B cell (primary cell): ENCODE measurements at regions of chr4 and their contacts with region 1.

Region 1: DNA sequence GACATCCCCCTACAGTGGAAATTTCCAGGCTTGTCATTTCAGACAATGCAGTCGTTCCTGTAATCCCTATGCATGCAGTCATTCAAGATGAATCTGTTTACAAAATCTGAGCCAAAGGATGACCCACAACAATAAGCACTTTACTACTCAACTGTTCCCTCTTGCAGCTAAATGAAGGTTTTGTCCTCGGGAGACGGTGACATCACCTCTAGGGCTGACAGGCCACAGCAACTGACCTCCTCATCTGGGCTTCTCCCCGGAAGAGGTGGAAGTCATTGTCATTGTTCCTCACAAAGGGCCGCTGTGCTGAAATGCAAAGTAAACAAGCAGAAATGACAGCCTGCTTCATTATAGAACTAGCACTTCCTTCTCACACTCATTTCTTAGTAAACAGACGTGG is 29.2 kb downstream of the CLRN2 start:
- DNase-seq: no peak
- ATAC-seq: no peak
- H3K4me3 ChIP-seq: no peak overlapping the region
- H3K4me3 Mint-ChIP-seq: no peak overlapping the region
- H3K27ac ChIP-seq: no peak overlapping the region
- H3K27ac Mint-ChIP-seq: no peak overlapping the region
- H3K4me1 ChIP-seq: no peaks in the 10 kb centered on the region
- H3K4me1 Mint-ChIP-seq: no peaks in the 10 kb centered on the region
- H3K27me3 ChIP-seq: peaks cover 0 to 2% (median 0%) of the 10 kb centered on the region in 4 experiments
- H3K27me3 Mint-ChIP-seq: peaks cover 22% of the 10 kb centered on the region
- CTCF ChIP-seq: no peak

Region 2: GRCh38 chr4:17286752-17287460 is 257.3 kb before region 1 on chr4:
- CTCF ChIA-PET with region 1: no interaction called
- POLR2A ChIA-PET with region 1: no interaction called
- intact Hi-C with region 1: no loop called
- DNase-seq: no peak
- ATAC-seq: no peak
- H3K4me3 ChIP-seq: no peak overlapping the region
- H3K4me3 Mint-ChIP-seq: no peak overlapping the region
- H3K27ac ChIP-seq: no peak overlapping the region
- H3K27ac Mint-ChIP-seq: no peak overlapping the region
- H3K4me1 ChIP-seq: no peaks in the 10 kb centered on the region
- H3K4me1 Mint-ChIP-seq: no peaks in the 10 kb centered on the region
- H3K27me3 ChIP-seq: no peaks in the 10 kb centered on the region
- H3K27me3 Mint-ChIP-seq: no peaks in the 10 kb centered on the region
- CTCF ChIP-seq: no peak

Region 3: DNA sequence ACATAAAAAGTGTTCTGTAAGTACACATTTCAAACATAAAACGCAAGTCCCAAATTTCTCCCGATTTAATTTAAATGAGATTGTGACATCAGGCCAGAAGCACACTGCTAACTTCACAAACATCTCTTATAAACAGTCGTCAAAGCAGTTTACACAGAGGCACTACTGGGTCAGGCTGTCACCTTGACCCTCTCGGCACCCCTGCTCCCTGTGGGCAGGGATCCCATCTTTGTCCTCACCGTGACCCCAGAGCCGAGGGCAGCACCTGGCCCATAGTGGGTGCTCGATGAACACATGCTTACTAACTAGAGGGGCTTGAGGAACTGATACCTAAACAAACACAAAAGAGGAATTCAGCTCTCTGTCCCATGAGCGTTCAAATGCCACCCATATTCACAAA is 54.5 kb before region 1 on chr4:
- CTCF ChIA-PET with region 1: no interaction called
- POLR2A ChIA-PET with region 1: no interaction called
- intact Hi-C with region 1: no loop called
- DNase-seq: no peak
- ATAC-seq: no peak
- H3K4me3 ChIP-seq: no peak overlapping the region
- H3K4me3 Mint-ChIP-seq: no peak overlapping the region
- H3K27ac ChIP-seq: no peak overlapping the region
- H3K27ac Mint-ChIP-seq: no peak overlapping the region
- H3K4me1 ChIP-seq: no peaks in the 10 kb centered on the region
- H3K4me1 Mint-ChIP-seq: no peaks in the 10 kb centered on the region
- H3K27me3 ChIP-seq: no peaks in the 10 kb centered on the region
- H3K27me3 Mint-ChIP-seq: no peaks in the 10 kb centered on the region
- CTCF ChIP-seq: no peak

Region 4: DNA sequence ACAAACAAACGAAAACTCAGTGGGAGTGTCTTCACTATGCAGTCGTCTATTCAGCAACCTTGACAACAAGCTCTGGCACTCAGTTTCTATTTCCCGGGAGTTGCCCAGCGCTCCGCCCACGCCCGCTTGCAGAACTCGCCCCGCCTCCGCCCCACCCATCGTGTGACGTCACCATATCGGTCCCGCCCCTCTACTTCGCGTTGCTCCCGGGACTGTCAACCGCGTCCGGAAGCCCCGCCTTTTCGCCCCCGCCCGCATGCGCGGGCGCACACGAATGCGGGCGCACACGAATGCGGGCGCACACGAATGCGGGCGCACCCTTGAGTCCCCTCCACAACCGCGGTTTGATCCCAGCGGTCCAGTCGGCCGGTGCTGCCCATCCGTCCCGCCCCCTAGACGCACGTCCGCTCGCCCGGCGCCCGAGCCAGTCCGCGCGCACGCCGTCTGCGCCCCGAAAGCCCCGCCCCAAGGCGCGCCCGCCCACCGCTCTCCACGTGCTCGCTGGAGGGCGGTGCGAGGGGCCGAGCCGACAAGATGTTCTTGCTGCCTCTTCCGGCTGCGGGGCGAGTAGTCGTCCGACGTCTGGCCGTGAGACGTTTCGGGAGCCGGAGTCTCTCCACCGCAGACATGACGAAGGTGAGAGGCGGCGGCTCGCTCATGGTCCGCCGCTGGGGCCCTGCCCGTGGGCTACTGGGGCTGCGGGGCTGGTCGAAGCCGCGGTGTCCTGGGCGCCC is 32.9 kb after region 1 on chr4 and contains the start of gene LAP3:
- CTCF ChIA-PET with region 1: interaction called, 4 read pairs
- POLR2A ChIA-PET with region 1: no interaction called
- intact Hi-C with region 1: loop called (anchors 1 kb)
- DNase-seq: peak; percentile 99
- ATAC-seq: peak; percentile 89
- H3K4me3 ChIP-seq: peak within 1 kb of the TSS; percentile 71 to 95 (median 83)
- H3K4me3 Mint-ChIP-seq: peak within 1 kb of the TSS; percentile 92
- H3K27ac ChIP-seq: peak within 1 kb of the TSS; percentile 85 to 87
- H3K27ac Mint-ChIP-seq: peak within 1 kb of the TSS; percentile 96
- H3K4me1 ChIP-seq: peaks cover 13 to 25% of the 10 kb centered on the region in 2 donors
- H3K4me1 Mint-ChIP-seq: peaks cover 30% of the 10 kb centered on the region
- H3K27me3 ChIP-seq: no peaks in the 10 kb centered on the region
- H3K27me3 Mint-ChIP-seq: no peaks in the 10 kb centered on the region
- CTCF ChIP-seq: no peak
- total RNA-seq, gene LAP3: 30.1 and 33.5 TPM in 2 replicates

Region 5: DNA sequence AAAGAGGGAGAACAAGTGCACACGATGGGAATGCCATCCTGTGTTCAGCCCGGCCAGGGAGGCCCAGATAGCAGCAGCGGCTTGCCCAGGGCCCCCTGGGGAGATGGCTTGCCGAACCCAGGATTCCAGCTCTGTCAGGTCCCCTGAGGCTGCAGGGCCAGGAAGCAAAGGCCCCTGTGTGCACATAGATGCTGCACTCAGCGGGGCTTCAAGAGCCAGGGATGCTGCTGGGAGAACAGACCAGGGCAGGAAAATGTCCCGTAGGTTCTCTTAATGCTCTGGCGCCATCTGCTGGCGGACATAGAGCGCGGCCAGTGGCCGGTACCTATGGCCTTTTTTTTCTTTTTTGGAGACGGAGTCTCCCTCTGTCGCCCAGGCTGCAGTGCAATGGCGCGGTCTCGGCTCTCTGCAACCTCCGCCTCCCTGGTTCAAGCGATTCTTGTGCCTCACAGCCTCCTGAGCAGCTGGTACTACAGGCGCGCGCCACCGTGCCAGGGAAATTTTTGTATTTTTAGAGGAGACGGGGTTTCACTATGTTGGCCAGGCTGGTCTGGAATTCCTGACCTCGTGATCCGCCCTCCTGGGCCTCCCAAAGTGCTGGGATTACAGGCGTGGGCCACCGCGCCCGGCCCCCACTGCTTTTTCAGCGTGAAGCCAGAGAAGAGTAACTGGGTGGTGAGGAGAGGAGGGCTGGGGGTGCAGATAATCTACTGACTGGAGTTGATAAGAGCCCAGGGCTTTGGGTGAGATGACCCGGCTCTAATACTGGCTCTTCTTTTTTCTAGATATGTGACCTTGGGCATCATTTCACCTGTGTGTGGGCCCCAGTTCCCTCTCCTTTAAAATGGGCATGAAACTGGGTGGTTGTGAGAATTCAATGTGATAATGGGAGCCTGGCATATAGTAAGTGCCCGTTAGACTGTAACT is 92.8 kb after region 1 on chr4:
- CTCF ChIA-PET with region 1: interaction called, 132 read pairs
- POLR2A ChIA-PET with region 1: no interaction called
- intact Hi-C with region 1: loop called (anchors 1 kb)
- DNase-seq: peak; percentile 76
- ATAC-seq: peak; percentile 82
- H3K4me3 ChIP-seq: no peak overlapping the region
- H3K4me3 Mint-ChIP-seq: no peak overlapping the region
- H3K27ac ChIP-seq: no peak overlapping the region
- H3K27ac Mint-ChIP-seq: no peak overlapping the region
- H3K4me1 ChIP-seq: peaks cover 0 to 3% of the 10 kb centered on the region in 2 donors
- H3K4me1 Mint-ChIP-seq: no peaks in the 10 kb centered on the region
- H3K27me3 ChIP-seq: no peaks in the 10 kb centered on the region
- H3K27me3 Mint-ChIP-seq: no peaks in the 10 kb centered on the region
- CTCF ChIP-seq: peak; percentile 93

Region 6: GRCh38 chr4:17680559-17681280 is 136.5 kb after region 1 on chr4:
- CTCF ChIA-PET with region 1: no interaction called
- POLR2A ChIA-PET with region 1: no interaction called
- intact Hi-C with region 1: no loop called
- DNase-seq: no peak
- ATAC-seq: no peak
- H3K4me3 ChIP-seq: no peak overlapping the region
- H3K4me3 Mint-ChIP-seq: no peak overlapping the region
- H3K27ac ChIP-seq: no peak overlapping the region
- H3K27ac Mint-ChIP-seq: no peak overlapping the region
- H3K4me1 ChIP-seq: no peaks in the 10 kb centered on the region
- H3K4me1 Mint-ChIP-seq: no peaks in the 10 kb centered on the region
- H3K27me3 ChIP-seq: peaks cover 0 to 3% (median 0%) of the 10 kb centered on the region in 4 experiments
- H3K27me3 Mint-ChIP-seq: peaks cover 16% of the 10 kb centered on the region
- CTCF ChIP-seq: no peak

Region 7: GRCh38 chr4:17817020-17817419 is 272.8 kb after region 1 on chr4:
- CTCF ChIA-PET with region 1: interaction called, 11 read pairs
- POLR2A ChIA-PET with region 1: no interaction called
- intact Hi-C with region 1: no loop called
- DNase-seq: peak; percentile 65
- ATAC-seq: peak; percentile 70
- H3K4me3 ChIP-seq: no peak overlapping the region
- H3K4me3 Mint-ChIP-seq: no peak overlapping the region
- H3K27ac ChIP-seq: no peak overlapping the region
- H3K27ac Mint-ChIP-seq: no peak overlapping the region
- H3K4me1 ChIP-seq: no peaks in the 10 kb centered on the region
- H3K4me1 Mint-ChIP-seq: peaks cover 8% of the 10 kb centered on the region
- H3K27me3 ChIP-seq: no peaks in the 10 kb centered on the region
- H3K27me3 Mint-ChIP-seq: no peaks in the 10 kb centered on the region
- CTCF ChIP-seq: peak; percentile 74

Region 8: GRCh38 chr4:18593445-18594002 is 1049.3 kb after region 1 on chr4:
- CTCF ChIA-PET with region 1: interaction called, 13 read pairs
- POLR2A ChIA-PET with region 1: no interaction called
- intact Hi-C with region 1: no loop called
- DNase-seq: peak; percentile 70
- ATAC-seq: peak; percentile 49
- H3K4me3 ChIP-seq: no peak overlapping the region
- H3K4me3 Mint-ChIP-seq: no peak overlapping the region
- H3K27ac ChIP-seq: no peak overlapping the region
- H3K27ac Mint-ChIP-seq: no peak overlapping the region
- H3K4me1 ChIP-seq: no peaks in the 10 kb centered on the region
- H3K4me1 Mint-ChIP-seq: peaks cover 3% of the 10 kb centered on the region
- H3K27me3 ChIP-seq: no peaks in the 10 kb centered on the region
- H3K27me3 Mint-ChIP-seq: peaks cover 17% of the 10 kb centered on the region
- CTCF ChIP-seq: peak; percentile 89